ENCODE measurements at regions of chr12 and their contacts with region 1.

Region 1: GRCh38 chr12:16110596-16110995 is 166.9 kb downstream of the SLC15A5 start:
- DNase-seq: no peak
- H3K4me3 ChIP-seq: no peak overlapping the region
- H3K27ac ChIP-seq: no peak overlapping the region
- H3K4me1 ChIP-seq: no peaks in the 10 kb centered on the region
- H3K27me3 ChIP-seq: no peaks in the 10 kb centered on the region
- CTCF ChIP-seq: no peak

Region 2: GRCh38 chr12:16473610-16474326 is 363.2 kb after region 1 on chr12:
- CTCF ChIA-PET with region 1: interaction called, 12 read pairs
- dilution Hi-C with region 1: no loop called
- in situ Hi-C with region 1: no loop called
- intact Hi-C with region 1: no loop called
- DNase-seq: no peak
- H3K4me3 ChIP-seq: no peak overlapping the region
- H3K27ac ChIP-seq: no peak overlapping the region
- H3K4me1 ChIP-seq: no peaks in the 10 kb centered on the region
- H3K27me3 ChIP-seq: no peaks in the 10 kb centered on the region
- CTCF ChIP-seq: no peak